Prostate gland (tissue), 2 donors: ENCODE measurements at regions of chr5 and their contacts with region 1.

Region 1: DNA sequence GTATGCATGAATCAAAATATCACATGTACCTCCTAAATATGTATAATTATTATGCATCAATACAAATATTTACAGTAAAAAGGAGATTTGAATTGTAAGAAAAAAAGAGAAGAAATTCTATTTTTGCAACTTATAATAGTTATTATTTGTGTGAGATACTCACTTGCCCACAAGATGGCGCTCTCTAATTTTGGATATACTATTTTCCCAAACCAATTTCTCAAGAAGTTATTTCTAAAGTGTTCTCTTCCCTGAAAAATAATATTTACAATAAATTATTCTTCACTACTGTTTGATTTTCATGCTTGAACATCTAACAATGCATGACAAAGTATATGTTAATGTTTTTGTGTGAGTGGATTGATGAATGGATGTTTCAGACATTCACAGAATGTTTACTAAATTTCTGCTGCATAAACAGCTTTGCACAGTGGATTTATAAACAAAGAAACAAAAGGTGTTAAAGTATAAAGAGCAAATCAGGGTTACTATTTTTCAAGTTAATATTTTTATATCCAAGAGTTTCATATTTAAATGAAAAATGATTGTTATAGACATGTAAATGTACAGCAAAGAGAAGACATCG is 503.4 kb downstream of the PDE4D start:
- DNase-seq: peak; percentile 29
- H3K4me3 ChIP-seq: no peak overlapping the region
- H3K27ac ChIP-seq: no peak overlapping the region
- H3K4me1 ChIP-seq: no peaks in the 10 kb centered on the region
- H3K27me3 ChIP-seq: no peaks in the 10 kb centered on the region
- CTCF ChIP-seq: peak; percentile 70 to 75 (median 74)
- POLR2A ChIP-seq: no peak

Region 2: GRCh38 chr5:59673438-59674058 is 283.4 kb after region 1 on chr5:
- intact Hi-C with region 1: loop called (anchors 5 kb)
- DNase-seq: no peak
- H3K4me3 ChIP-seq: no peak overlapping the region
- H3K27ac ChIP-seq: no peak overlapping the region
- H3K4me1 ChIP-seq: no peaks in the 10 kb centered on the region
- H3K27me3 ChIP-seq: no peaks in the 10 kb centered on the region
- CTCF ChIP-seq: peak; percentile 80 to 87 (median 84)
- POLR2A ChIP-seq: no peak